SK-N-SH (cell line): ENCODE measurements at regions of chrX and their contacts with region 1.

Region 1: GRCh38 chrX:130575831-130576389 is 174.1 kb downstream of the RBMX2 start:
- DNase-seq: peak; percentile 55
- H3K4me3 ChIP-seq: no peak overlapping the region; a peak in 1 of 4 replicates
- H3K27ac ChIP-seq: no peak overlapping the region
- H3K4me1 ChIP-seq: no peaks in the 10 kb centered on the region
- H3K27me3 ChIP-seq: no peaks in the 10 kb centered on the region
- CTCF ChIP-seq: peak; percentile 87
- EP300 ChIP-seq: no peak
- RAD21 ChIP-seq: peak; percentile 80

Region 2: GRCh38 chrX:129932016-129932820 is 643.7 kb before region 1 on chrX:
- CTCF ChIA-PET with region 1: no interaction called
- POLR2A ChIA-PET with region 1: no interaction called
- DNase-seq: peak; percentile 94
- H3K4me3 ChIP-seq: peak overlapping the region; percentile 57 to 63
- H3K27ac ChIP-seq: peak overlapping the region; percentile 77 to 87
- H3K4me1 ChIP-seq: no peaks in the 10 kb centered on the region; a peak in 1 of 4 replicates
- H3K27me3 ChIP-seq: peaks cover 11% of the 10 kb centered on the region; the same call in 1 of the 2 replicates
- CTCF ChIP-seq: no peak
- EP300 ChIP-seq: no peak
- RAD21 ChIP-seq: no peak

Region 3: GRCh38 chrX:130176354-130176776 is 399.5 kb before region 1 on chrX:
- CTCF ChIA-PET with region 1: no interaction called
- POLR2A ChIA-PET with region 1: no interaction called
- DNase-seq: no peak
- H3K4me3 ChIP-seq: no peak overlapping the region
- H3K27ac ChIP-seq: no peak overlapping the region
- H3K4me1 ChIP-seq: peaks cover 8 to 24% of the 10 kb centered on the region in 2 experiments; a peak in 2 of 4 replicates
- H3K27me3 ChIP-seq: peaks cover 8% of the 10 kb centered on the region; the same call in 1 of the 2 replicates
- CTCF ChIP-seq: no peak
- EP300 ChIP-seq: no peak
- RAD21 ChIP-seq: no peak

Region 4: DNA sequence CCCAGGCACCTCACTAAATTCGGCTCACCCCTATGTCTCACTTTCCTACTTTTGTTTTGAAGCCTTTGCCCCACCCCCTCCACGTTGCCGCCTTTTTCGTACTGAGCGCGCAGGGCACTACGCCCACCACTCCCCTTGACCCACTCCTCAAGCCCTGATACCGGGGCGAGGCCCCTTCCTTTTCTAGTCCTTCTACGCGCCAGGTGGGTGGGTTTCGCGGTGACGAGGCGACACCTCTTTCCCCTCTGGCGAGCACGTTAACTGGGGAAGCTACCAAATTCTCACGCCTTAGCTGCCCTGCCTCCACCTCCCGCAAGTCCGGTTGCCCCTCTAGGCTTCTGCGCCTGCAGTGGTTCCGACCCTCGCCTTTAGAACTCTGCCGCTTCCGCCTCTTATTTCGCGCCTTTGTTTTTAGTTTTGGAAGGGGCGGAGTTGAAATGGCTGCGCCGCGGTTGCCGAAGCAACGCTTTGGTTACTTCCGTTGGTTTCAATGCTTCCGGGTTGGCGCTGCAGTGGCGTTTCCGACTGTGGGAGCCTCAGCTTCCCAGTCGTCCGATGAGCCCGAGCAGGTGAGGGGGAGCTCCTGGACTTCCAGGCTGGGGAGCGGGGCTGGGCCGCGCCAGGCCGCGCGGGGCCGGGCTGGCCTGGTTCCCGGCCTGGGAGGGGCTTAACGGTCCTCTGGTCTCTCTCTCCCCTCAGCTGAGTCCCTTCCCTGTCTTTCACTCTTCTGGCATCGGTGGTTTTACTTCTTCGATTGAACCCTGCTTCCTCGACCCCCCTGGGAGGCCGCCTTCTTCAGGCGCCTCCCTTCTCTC is 236.3 kb before region 1 on chrX and contains the start of gene SLC25A14:
- CTCF ChIA-PET with region 1: no interaction called
- POLR2A ChIA-PET with region 1: no interaction called
- DNase-seq: peak; percentile 74
- H3K4me3 ChIP-seq: peak within 1 kb of the TSS; percentile 67 to 71
- H3K27ac ChIP-seq: peak within 1 kb of the TSS; percentile 30 to 53; a peak in 3 of 4 replicates
- H3K4me1 ChIP-seq: no peaks in the 10 kb centered on the region; a peak in 1 of 4 replicates
- H3K27me3 ChIP-seq: no peaks in the 10 kb centered on the region; the same call in 1 of the 2 replicates
- CTCF ChIP-seq: no peak
- EP300 ChIP-seq: no peak
- RAD21 ChIP-seq: no peak
- polyA plus RNA-seq, gene SLC25A14: 14.0 and 21.7 TPM in 2 replicates

Region 5: DNA sequence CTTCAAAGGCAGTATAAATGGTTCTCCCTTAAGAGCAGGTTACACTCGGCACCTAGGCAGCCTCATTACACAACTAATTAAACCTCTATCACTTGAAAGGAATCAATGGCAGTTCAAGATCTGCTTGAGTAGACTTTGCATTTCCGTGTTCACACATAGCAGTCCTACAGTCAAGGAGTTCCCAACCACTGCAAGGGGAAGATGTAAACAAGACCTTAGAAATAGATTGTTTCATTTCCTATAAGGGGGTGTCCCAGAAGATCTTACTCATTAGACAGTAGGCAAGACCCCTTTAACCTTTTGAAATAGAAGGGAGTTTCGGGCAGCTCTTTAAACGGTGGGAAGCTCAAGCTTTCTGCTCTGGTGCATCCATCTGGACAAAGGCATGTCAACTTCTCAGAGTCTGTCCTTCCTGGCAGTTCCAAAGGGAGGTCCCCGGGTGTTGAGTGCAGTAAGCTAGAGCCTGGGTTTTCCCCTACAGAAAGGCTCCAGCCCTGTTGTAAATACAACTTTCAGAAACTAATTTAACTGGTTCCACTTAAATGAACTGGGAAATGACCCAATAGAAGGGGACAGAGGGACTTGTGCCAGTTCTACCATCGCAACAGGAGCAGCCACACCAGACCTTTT is 23.4 kb before region 1 on chrX:
- CTCF ChIA-PET with region 1: interaction called, 13 read pairs
- POLR2A ChIA-PET with region 1: no interaction called
- DNase-seq: no peak
- H3K4me3 ChIP-seq: no peak overlapping the region
- H3K27ac ChIP-seq: no peak overlapping the region
- H3K4me1 ChIP-seq: peaks cover 0 to 5% of the 10 kb centered on the region in 2 experiments; a peak in 1 of 4 replicates
- H3K27me3 ChIP-seq: peaks cover 20% of the 10 kb centered on the region; the same call in 1 of the 2 replicates
- CTCF ChIP-seq: no peak
- EP300 ChIP-seq: no peak
- RAD21 ChIP-seq: no peak

Region 6: GRCh38 chrX:130594453-130594916 is 18.6 kb after region 1 on chrX:
- CTCF ChIA-PET with region 1: interaction called, 12 read pairs
- POLR2A ChIA-PET with region 1: no interaction called
- DNase-seq: peak; percentile 5
- H3K4me3 ChIP-seq: no peak overlapping the region
- H3K27ac ChIP-seq: no peak overlapping the region
- H3K4me1 ChIP-seq: no peaks in the 10 kb centered on the region; a peak in 1 of 4 replicates
- H3K27me3 ChIP-seq: peaks cover 18% of the 10 kb centered on the region; the same call in 1 of the 2 replicates
- CTCF ChIP-seq: no peak
- EP300 ChIP-seq: no peak
- RAD21 ChIP-seq: no peak

Region 7: GRCh38 chrX:130902783-130903613 is 327.1 kb after region 1 on chrX and contains the start of gene ENOX2:
- CTCF ChIA-PET with region 1: interaction called, 25 read pairs
- POLR2A ChIA-PET with region 1: interaction called, 5 read pairs
- DNase-seq: peak; percentile 81
- H3K4me3 ChIP-seq: peak within 1 kb of the TSS; percentile 71 to 72
- H3K27ac ChIP-seq: peak within 1 kb of the TSS; percentile 77 to 91
- H3K4me1 ChIP-seq: no peaks in the 10 kb centered on the region; a peak in 1 of 4 replicates
- H3K27me3 ChIP-seq: no peaks in the 10 kb centered on the region
- CTCF ChIP-seq: no peak
- EP300 ChIP-seq: peak in 1 of 2 experiments; percentile 20; a peak in 1 of 4 replicates
- RAD21 ChIP-seq: no peak
- polyA plus RNA-seq, gene ENOX2: 8.8 and 12.8 TPM in 2 replicates

Region 8: DNA sequence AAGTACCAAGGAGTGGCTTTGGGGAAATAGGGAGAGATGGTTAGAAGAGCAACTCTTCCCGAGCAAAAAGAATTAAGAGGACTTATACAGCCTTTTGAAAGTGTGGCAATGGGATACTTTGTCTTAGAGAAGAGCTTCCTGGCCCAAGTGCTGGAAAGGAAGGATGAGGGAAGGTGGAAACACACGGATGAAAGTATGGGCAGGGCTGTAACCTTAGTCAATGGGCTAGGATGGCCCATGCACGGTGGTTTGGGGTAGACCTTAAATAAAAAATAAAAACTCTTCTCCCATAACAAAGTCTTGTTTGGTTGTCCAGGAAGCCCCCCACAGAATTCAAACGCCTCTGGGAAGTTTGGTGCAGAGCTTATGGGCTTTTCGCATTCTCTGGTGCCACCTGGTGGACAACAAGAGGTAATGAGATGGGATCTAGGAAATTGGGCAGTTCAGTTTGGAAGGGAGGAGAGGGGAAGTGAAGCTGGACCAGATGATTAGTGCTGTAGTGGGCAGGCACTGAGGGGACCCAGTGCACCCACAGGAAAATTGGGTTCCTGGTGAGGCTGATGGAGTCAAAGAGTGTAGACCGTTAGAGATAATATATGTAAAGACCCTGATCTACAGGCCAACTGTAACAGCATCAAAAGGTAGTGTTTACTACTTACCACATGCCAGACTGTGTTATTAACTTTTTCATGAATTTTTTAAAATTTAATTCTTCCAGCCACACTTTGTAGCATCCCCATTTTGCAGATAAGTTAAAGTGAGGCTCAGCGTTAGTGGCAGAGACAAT is 340.9 kb after region 1 on chrX:
- CTCF ChIA-PET with region 1: interaction called, 51 read pairs
- POLR2A ChIA-PET with region 1: no interaction called
- DNase-seq: peak; percentile 62
- H3K4me3 ChIP-seq: no peak overlapping the region; a peak in 1 of 4 replicates
- H3K27ac ChIP-seq: no peak overlapping the region
- H3K4me1 ChIP-seq: no peaks in the 10 kb centered on the region
- H3K27me3 ChIP-seq: peaks cover 13% of the 10 kb centered on the region; the same call in 1 of the 2 replicates
- CTCF ChIP-seq: peak; percentile 87
- EP300 ChIP-seq: no peak
- RAD21 ChIP-seq: peak; percentile 92